Caco-2 (cell line): ENCODE measurements at regions of chr19 and their contacts with region 1.

Region 1: GRCh38 chr19:6087074-6087571 is 23.2 kb downstream of the RFX2 start:
- DNase-seq: peak; percentile 71 to 84
- H3K4me3 ChIP-seq: peak overlapping the region; percentile 27
- H3K4me3 Mint-ChIP-seq: peak overlapping the region; percentile 68
- H3K27ac Mint-ChIP-seq: peak overlapping the region; percentile 93
- H3K4me1 ChIP-seq: peaks cover 33% of the 10 kb centered on the region
- H3K4me1 Mint-ChIP-seq: peaks cover 24% of the 10 kb centered on the region
- H3K27me3 ChIP-seq: no peaks in the 10 kb centered on the region
- H3K27me3 Mint-ChIP-seq: no peaks in the 10 kb centered on the region
- CTCF ChIP-seq: no peak

Region 2: GRCh38 chr19:6066661-6067646 is 20.2 kb before region 1 on chr19:
- CTCF ChIA-PET with region 1: no interaction called
- POLR2A ChIA-PET with region 1: no interaction called
- intact Hi-C with region 1: loop called (anchors 1 kb)
- DNase-seq: peak; percentile 89
- H3K4me3 ChIP-seq: no peak overlapping the region
- H3K4me3 Mint-ChIP-seq: peak overlapping the region; percentile 55
- H3K27ac Mint-ChIP-seq: peak overlapping the region; percentile 89
- H3K4me1 ChIP-seq: peaks cover 26% of the 10 kb centered on the region
- H3K4me1 Mint-ChIP-seq: peaks cover 24% of the 10 kb centered on the region
- H3K27me3 ChIP-seq: no peaks in the 10 kb centered on the region
- H3K27me3 Mint-ChIP-seq: no peaks in the 10 kb centered on the region
- CTCF ChIP-seq: no peak

Region 3: DNA sequence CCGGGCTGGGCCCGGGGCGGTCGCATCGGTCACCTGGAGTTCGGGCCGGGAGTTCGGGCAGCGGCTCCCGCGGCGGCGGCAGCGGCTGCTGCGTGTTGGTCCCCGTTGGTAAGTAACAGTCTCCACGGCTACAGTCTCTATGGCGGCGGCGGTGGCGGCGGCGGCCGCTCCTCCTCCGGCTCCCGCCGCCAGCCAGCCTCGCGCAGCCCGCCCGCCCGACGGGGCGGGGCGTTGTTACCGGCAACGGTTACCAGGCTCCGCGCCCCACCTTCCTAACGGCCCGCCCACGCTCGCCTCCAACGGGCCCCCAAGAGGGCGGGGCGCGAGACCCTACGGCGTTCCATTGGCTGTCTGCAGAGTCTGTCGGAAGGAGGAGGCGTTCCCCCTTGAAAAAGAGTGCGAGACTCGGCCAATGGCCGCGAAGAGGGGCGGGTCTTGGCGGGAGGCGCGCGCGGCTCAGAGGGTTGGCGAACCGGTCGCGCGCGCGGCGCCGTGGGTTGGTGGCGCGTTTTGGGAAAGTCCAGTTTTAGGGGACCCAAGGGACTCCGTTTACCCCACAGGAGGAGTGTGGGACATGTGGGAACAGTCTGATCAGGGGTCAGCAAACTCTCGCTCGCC is 23.3 kb after region 1 on chr19 and contains the start of gene RFX2:
- CTCF ChIA-PET with region 1: interaction called, 3 read pairs
- POLR2A ChIA-PET with region 1: interaction called, 4 read pairs
- intact Hi-C with region 1: loop called (anchors 2 kb)
- DNase-seq: peak; percentile 98 to 99
- H3K4me3 ChIP-seq: peak within 1 kb of the TSS; percentile 56
- H3K4me3 Mint-ChIP-seq: peak within 1 kb of the TSS; percentile 81
- H3K27ac Mint-ChIP-seq: peak within 1 kb of the TSS; percentile 82
- H3K4me1 ChIP-seq: 0 out of 2 replicates have a peak, but pooled peaks cover 4% of the 10 kb centered on the region
- H3K4me1 Mint-ChIP-seq: peaks cover 24% of the 10 kb centered on the region
- H3K27me3 ChIP-seq: no peaks in the 10 kb centered on the region
- H3K27me3 Mint-ChIP-seq: no peaks in the 10 kb centered on the region
- CTCF ChIP-seq: no peak
- total RNA-seq, gene RFX2: 9.3 and 10.2 TPM in 2 replicates

Region 4: DNA sequence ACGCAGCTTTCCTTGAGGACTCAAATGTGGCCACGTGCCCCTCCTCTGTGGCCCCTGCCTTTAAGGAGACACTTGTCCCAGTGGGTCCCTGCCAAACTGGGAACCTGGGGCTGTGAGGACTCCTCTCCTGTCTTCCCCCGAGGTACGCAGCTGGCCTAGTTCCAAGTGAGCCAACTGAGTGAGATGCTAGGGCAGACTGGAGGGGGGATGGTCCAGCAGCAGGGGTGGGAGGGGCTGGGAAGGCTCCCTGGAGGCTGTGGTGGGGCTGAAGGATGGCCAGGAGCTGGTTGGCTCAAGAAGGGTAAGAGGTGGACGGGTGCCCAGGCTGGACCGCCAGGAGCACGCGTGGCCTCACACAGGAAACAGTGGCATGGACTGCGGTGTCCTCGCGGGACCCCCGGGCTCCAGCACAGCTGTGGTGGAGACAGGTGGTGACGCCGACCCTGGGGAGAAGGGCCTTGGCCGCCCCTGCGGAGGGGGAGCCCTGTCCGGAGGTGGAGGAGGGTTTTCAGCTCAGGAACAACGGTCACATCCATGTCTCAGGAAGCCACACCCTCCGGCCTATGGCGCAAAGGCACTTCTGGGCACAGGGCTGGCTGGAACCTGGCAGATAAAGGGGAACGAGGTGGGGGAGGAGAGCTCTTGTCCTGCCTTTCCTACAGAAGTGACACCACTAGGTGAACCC is 146.8 kb after region 1 on chr19:
- CTCF ChIA-PET with region 1: no interaction called
- POLR2A ChIA-PET with region 1: no interaction called
- intact Hi-C with region 1: no loop called
- DNase-seq: peak in 1 of 2 experiments; percentile 11
- H3K4me3 ChIP-seq: no peak overlapping the region
- H3K4me3 Mint-ChIP-seq: no peak overlapping the region
- H3K27ac Mint-ChIP-seq: peak overlapping the region; percentile 42
- H3K4me1 ChIP-seq: no peaks in the 10 kb centered on the region
- H3K4me1 Mint-ChIP-seq: peaks cover 7% of the 10 kb centered on the region
- H3K27me3 ChIP-seq: no peaks in the 10 kb centered on the region
- H3K27me3 Mint-ChIP-seq: no peaks in the 10 kb centered on the region
- CTCF ChIP-seq: no peak